CD8-positive, alpha-beta T cell (primary cell): ENCODE measurements at regions of chr22 and their contacts with region 1.

Region 1: DNA sequence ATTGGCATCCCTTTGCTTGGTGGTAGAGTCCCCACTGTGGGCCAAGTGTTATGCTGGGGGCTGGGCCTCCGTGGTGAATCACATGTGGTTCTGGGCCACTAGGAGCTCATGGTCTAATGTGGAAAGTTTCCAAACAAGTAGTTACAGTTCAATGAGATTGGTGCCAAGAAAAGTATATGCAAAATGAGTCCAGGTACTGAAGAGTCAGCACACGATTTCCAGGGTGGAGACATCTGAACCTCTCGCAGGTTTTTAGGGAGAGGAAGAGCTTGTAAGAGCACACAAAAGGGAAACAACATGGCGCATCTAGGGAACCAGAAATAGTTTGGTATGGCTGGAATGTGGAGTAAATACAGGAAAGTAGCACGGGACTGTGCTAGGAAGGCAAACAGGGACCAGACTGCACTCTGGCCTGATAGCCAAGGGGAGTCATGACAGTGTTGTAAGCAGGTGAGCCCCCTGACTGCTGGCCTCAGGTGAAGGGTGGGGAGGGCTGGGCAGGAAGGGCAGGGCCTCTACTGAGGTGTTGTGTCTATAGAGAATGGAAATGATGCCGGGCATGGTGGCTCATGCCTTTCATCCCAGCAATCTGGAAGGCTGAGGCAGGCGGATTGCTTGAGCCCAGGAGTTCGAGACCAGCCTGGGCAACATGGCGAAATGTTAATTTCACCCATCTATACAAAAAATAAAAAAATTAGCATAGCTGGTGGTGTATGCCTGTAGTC is 12.6 kb downstream of the POLR2F start:
- DNase-seq: no peak
- ATAC-seq: no peak
- H3K4me3 ChIP-seq: no peak overlapping the region
- H3K4me3 Mint-ChIP-seq: no peak overlapping the region
- H3K27ac ChIP-seq: no peak overlapping the region
- H3K27ac Mint-ChIP-seq: no peak overlapping the region
- H3K4me1 ChIP-seq: no peaks in the 10 kb centered on the region
- H3K4me1 Mint-ChIP-seq: peaks cover 8% of the 10 kb centered on the region
- H3K27me3 ChIP-seq: no peaks in the 10 kb centered on the region
- H3K27me3 Mint-ChIP-seq: no peaks in the 10 kb centered on the region
- CTCF ChIP-seq: no peak

Region 2: GRCh38 chr22:37643225-37643847 is 322.8 kb before region 1 on chr22:
- CTCF ChIA-PET with region 1: no interaction called
- POLR2A ChIA-PET with region 1: no interaction called
- intact Hi-C with region 1: loop called in 1 of 2 experiments (anchors 1 kb)
- DNase-seq: peak; percentile 78 to 93 (median 85)
- ATAC-seq: peak; percentile 62
- H3K4me3 ChIP-seq: no peak overlapping the region
- H3K4me3 Mint-ChIP-seq: peak overlapping the region; percentile 65
- H3K27ac ChIP-seq: peak overlapping the region; percentile 15 to 43
- H3K27ac Mint-ChIP-seq: peak overlapping the region; percentile 69
- H3K4me1 ChIP-seq: peaks cover 39% of the 10 kb centered on the region
- H3K4me1 Mint-ChIP-seq: peaks cover 42% of the 10 kb centered on the region
- H3K27me3 ChIP-seq: no peaks in the 10 kb centered on the region
- H3K27me3 Mint-ChIP-seq: no peaks in the 10 kb centered on the region
- CTCF ChIP-seq: peak; percentile 85

Region 3: GRCh38 chr22:37817705-37818408 is 148.2 kb before region 1 on chr22:
- CTCF ChIA-PET with region 1: interaction called, 53 read pairs
- POLR2A ChIA-PET with region 1: no interaction called
- intact Hi-C with region 1: loop called (anchors 1 kb)
- DNase-seq: peak; percentile 64 to 88 (median 81)
- ATAC-seq: peak; percentile 86
- H3K4me3 ChIP-seq: peak overlapping the region; percentile 20 to 38
- H3K4me3 Mint-ChIP-seq: peak overlapping the region; percentile 65
- H3K27ac ChIP-seq: no peak overlapping the region
- H3K27ac Mint-ChIP-seq: no peak overlapping the region
- H3K4me1 ChIP-seq: peaks cover 16% of the 10 kb centered on the region
- H3K4me1 Mint-ChIP-seq: peaks cover 15% of the 10 kb centered on the region
- H3K27me3 ChIP-seq: peaks cover under 1 to 4% of the 10 kb centered on the region in 2 experiments
- H3K27me3 Mint-ChIP-seq: peaks cover 17% of the 10 kb centered on the region
- CTCF ChIP-seq: peak; percentile 86

Region 4: GRCh38 chr22:37887610-37888378 is 78.3 kb before region 1 on chr22:
- CTCF ChIA-PET with region 1: interaction called, 3 read pairs
- POLR2A ChIA-PET with region 1: no interaction called
- intact Hi-C with region 1: loop called in 1 of 2 experiments (anchors 1 kb)
- DNase-seq: peak in 1 of 9 experiments; percentile 18
- ATAC-seq: no peak
- H3K4me3 ChIP-seq: no peak overlapping the region
- H3K4me3 Mint-ChIP-seq: no peak overlapping the region
- H3K27ac ChIP-seq: no peak overlapping the region
- H3K27ac Mint-ChIP-seq: peak overlapping the region; percentile 71
- H3K4me1 ChIP-seq: no peaks in the 10 kb centered on the region
- H3K4me1 Mint-ChIP-seq: peaks cover 16% of the 10 kb centered on the region
- H3K27me3 ChIP-seq: no peaks in the 10 kb centered on the region
- H3K27me3 Mint-ChIP-seq: no peaks in the 10 kb centered on the region
- CTCF ChIP-seq: no peak

Region 5: DNA sequence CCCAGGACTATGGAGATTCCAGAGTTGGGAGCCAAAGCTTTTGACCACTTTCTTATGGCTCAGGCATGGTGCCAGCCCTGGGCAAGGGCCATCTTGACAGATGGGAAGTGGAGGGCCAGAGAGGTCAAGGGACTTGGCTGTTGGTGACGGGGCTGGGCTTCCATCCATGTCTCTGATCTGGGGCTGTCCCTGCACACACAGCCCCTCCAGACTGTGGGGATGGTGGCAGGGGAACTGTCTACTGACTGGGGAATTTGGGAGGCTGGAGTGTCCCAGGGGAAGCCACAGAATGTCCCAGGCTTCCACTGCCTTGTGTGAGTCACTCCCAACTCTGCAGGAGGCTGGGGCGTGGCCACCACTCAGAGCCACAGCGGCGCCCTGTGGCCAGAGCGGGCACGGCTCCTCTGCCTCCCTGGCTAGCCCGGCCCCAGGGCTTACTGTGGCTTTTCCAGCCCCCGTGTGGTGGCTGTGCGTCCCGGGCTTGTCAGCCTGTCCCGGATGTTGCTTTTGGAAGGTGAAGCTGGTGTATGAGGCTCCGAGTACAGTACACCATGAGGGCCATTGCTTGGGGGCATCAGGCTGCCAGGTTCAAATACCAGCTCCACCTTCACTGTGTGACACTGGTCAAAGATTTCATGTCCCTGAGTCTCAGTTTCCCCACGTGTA is 32.3 kb before region 1 on chr22:
- CTCF ChIA-PET with region 1: interaction called, 6 read pairs
- POLR2A ChIA-PET with region 1: no interaction called
- intact Hi-C with region 1: loop called in 1 of 2 experiments (anchors 1 kb)
- DNase-seq: peak; percentile 54 to 86 (median 78)
- ATAC-seq: peak; percentile 100
- H3K4me3 ChIP-seq: no peak overlapping the region
- H3K4me3 Mint-ChIP-seq: no peak overlapping the region
- H3K27ac ChIP-seq: no peak overlapping the region
- H3K27ac Mint-ChIP-seq: no peak overlapping the region
- H3K4me1 ChIP-seq: peaks cover 7% of the 10 kb centered on the region
- H3K4me1 Mint-ChIP-seq: peaks cover 8% of the 10 kb centered on the region
- H3K27me3 ChIP-seq: no peaks in the 10 kb centered on the region
- H3K27me3 Mint-ChIP-seq: no peaks in the 10 kb centered on the region
- CTCF ChIP-seq: peak; percentile 82

Region 6: GRCh38 chr22:37953437-37954179 is 12.5 kb before region 1 on chr22 and contains the starts of genes C22orf23 and POLR2F:
- CTCF ChIA-PET with region 1: interaction called, 15 read pairs
- POLR2A ChIA-PET with region 1: no interaction called
- intact Hi-C with region 1: no loop called
- DNase-seq: peak; percentile 88 to 98 (median 97)
- ATAC-seq: peak; percentile 94
- H3K4me3 ChIP-seq: peak within 1 kb of the TSS; percentile 91 to 98
- H3K4me3 Mint-ChIP-seq: peak within 1 kb of the TSS; percentile 100
- H3K27ac ChIP-seq: peak within 1 kb of the TSS; percentile 62 to 79
- H3K27ac Mint-ChIP-seq: peak within 1 kb of the TSS; percentile 98
- H3K4me1 ChIP-seq: peaks cover 13% of the 10 kb centered on the region
- H3K4me1 Mint-ChIP-seq: peaks cover 45% of the 10 kb centered on the region
- H3K27me3 ChIP-seq: peaks cover 0 to 6% of the 10 kb centered on the region in 2 experiments
- H3K27me3 Mint-ChIP-seq: peaks cover 12% of the 10 kb centered on the region
- CTCF ChIP-seq: no peak
- total RNA-seq, gene C22orf23: 0.43 TPM in 1 of 2 experiments, not detected in the other
- total RNA-seq, gene POLR2F: 22.7 to 25.6 TPM

Region 7: DNA sequence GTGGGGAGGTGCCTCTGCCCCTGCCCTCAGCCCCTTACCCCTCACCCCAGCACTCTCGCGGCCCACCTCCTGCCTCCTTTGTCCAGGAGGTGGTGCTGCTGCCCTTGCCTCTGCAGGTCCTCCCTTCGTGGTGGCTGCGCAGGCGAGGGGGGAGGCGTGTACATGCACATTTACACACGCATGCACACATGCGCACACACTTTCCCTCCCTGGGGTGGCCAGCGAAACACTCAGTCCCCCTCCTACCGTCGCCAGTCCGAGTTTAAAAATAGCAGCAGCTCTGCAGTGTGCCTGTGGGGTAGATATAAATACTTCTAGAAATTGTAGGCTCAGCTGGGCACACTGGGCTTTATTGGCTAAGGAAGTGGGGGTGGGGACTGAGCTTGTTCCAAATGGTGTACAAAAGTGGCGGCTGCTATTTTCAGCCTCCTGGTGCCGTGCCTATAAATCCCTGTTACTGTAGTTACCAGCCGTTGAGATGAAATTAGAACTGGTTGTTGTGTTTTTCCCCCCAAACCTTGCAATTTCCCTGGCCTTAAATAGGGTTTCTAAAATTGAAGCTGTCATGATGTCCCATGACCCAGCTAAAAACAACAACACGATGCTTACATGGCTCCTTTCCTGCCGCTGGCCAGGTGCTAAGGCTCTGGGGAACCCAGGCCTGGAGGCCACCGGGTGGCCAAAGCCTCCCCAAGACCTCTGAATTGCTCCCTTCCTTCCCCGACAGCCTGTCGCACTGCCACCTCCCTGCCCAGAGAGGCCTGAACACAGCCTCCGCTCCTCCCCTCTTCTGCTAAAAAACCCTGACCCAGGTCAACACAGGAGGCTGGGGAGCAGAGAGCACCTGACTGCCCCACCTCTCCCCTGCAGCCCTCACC is 103.5 kb after region 1 on chr22:
- CTCF ChIA-PET with region 1: no interaction called
- POLR2A ChIA-PET with region 1: no interaction called
- intact Hi-C with region 1: no loop called
- DNase-seq: no peak
- ATAC-seq: no peak
- H3K4me3 ChIP-seq: no peak overlapping the region
- H3K4me3 Mint-ChIP-seq: no peak overlapping the region
- H3K27ac ChIP-seq: no peak overlapping the region
- H3K27ac Mint-ChIP-seq: no peak overlapping the region
- H3K4me1 ChIP-seq: no peaks in the 10 kb centered on the region
- H3K4me1 Mint-ChIP-seq: no peaks in the 10 kb centered on the region
- H3K27me3 ChIP-seq: no peaks in the 10 kb centered on the region
- H3K27me3 Mint-ChIP-seq: no peaks in the 10 kb centered on the region
- CTCF ChIP-seq: no peak